Activated CD4-positive, alpha-beta memory T cell treated with anti-CD3 and anti-CD28 coated beads for 36 hours (primary cell): ENCODE measurements at regions of chr10 and their contacts with region 1.

Region 1: GRCh38 chr10:91251430-91252056 is 31.1 kb downstream of the PCGF5 start:
- DNase-seq: peak; percentile 63
- H3K4me3 Mint-ChIP-seq: no peak overlapping the region
- H3K27ac Mint-ChIP-seq: no peak overlapping the region
- H3K4me1 Mint-ChIP-seq: peaks cover 4% of the 10 kb centered on the region
- H3K27me3 Mint-ChIP-seq: no peaks in the 10 kb centered on the region

Region 2: DNA sequence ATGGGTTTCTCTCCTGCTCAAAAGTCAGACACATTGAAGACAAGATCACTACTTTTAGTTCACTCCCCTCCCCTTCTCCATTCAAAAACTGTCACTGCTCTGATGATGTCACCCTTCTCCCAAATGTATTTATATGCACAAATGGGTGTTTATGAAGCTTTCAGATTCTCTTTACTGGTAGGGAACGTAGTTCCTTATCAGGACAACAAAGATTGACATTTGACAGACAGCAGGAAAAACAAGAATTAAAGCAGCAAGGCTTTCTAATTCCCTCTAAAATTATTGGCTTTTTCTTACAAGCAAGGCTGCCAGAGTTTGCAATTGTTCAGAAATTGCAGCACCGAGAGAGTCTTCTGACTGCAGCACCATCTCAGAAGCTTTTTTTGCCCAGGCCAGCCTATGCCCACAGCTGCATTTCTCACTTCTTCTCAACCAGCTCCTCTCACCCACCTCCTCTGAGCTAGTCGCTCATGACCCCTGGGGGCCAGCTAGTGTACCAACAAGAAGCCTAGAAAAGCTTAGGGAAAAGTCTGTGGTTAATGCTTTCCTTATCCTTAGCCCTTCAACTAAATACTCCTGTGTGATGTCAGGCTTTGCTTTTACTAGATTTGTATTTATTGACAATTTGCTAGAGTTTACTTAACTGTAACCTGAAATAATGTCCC is 658.8 kb before region 1 on chr10:
- CTCF ChIA-PET with region 1: no interaction called
- POLR2A ChIA-PET with region 1: no interaction called
- intact Hi-C with region 1: no loop called
- DNase-seq: peak; percentile 18
- H3K4me3 Mint-ChIP-seq: no peak overlapping the region
- H3K27ac Mint-ChIP-seq: no peak overlapping the region
- H3K4me1 Mint-ChIP-seq: no peaks in the 10 kb centered on the region
- H3K27me3 Mint-ChIP-seq: peaks cover 2% of the 10 kb centered on the region

Region 3: DNA sequence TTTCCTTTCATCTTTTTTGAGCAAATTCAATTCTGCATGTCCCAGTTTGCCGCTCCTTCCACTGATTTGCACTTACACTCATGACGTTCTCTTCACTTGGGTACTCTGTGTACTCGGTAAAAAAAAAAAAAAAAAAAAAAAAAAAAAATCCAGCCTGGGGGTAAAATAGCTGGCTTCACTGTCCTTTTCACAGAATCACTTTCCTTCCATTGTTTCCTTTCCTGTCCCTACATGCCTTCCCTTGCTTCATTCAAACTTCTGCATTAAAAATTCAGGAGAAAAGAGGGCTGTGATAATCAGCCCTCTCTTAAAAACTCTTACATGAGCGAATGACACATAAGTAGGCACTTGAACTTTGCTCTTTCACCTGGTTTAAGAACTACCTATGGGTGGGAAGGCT is 339.4 kb before region 1 on chr10:
- CTCF ChIA-PET with region 1: interaction called, 89 read pairs
- POLR2A ChIA-PET with region 1: no interaction called
- intact Hi-C with region 1: loop called (anchors 1 kb)
- DNase-seq: no peak
- H3K4me3 Mint-ChIP-seq: no peak overlapping the region
- H3K27ac Mint-ChIP-seq: no peak overlapping the region
- H3K4me1 Mint-ChIP-seq: peaks cover 2% of the 10 kb centered on the region
- H3K27me3 Mint-ChIP-seq: no peaks in the 10 kb centered on the region

Region 4: GRCh38 chr10:91043173-91043910 is 208.2 kb before region 1 on chr10:
- CTCF ChIA-PET with region 1: interaction called, 11 read pairs
- POLR2A ChIA-PET with region 1: no interaction called
- intact Hi-C with region 1: loop called (anchors 1 kb)
- DNase-seq: no peak
- H3K4me3 Mint-ChIP-seq: no peak overlapping the region
- H3K27ac Mint-ChIP-seq: no peak overlapping the region
- H3K4me1 Mint-ChIP-seq: no peaks in the 10 kb centered on the region
- H3K27me3 Mint-ChIP-seq: peaks cover 6% of the 10 kb centered on the region

Region 5: DNA sequence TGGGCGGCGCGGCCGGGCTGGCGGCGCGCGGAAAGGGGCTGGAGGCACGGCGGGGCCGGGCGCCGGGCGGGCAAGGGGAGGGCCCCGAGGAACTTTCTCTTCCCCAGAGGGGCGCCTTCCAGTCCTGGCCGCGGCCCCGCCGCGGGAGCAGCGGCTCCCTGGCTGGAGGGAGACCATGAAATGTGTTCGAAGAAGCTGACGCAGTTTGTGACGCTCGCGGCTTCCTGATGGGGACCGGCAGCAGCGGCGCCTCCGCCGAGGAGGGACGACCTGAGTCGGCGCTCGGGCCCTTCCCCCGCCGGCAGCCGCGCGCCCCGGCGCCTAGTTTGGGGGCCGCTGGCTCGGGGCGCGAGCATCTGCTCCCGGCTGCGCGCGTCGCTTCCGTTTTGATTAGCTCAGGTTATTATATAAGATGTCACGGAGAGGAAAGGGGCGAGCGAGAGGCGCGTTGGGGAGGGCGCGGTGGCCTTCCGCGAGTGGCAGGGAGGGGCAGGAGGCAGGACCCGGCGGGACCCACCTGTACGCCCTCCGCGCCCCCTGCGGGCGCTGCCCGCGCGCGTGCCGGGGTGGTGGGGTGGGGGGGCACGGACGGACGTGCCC is 88.2 kb before region 1 on chr10:
- CTCF ChIA-PET with region 1: interaction called, 11 read pairs
- POLR2A ChIA-PET with region 1: no interaction called
- intact Hi-C with region 1: loop called (anchors 2 kb)
- DNase-seq: peak; percentile 79
- H3K4me3 Mint-ChIP-seq: peak overlapping the region; percentile 82
- H3K27ac Mint-ChIP-seq: peak overlapping the region; percentile 87
- H3K4me1 Mint-ChIP-seq: peaks cover 47% of the 10 kb centered on the region
- H3K27me3 Mint-ChIP-seq: no peaks in the 10 kb centered on the region

Region 6: GRCh38 chr10:91220194-91220953 is 31.2 kb before region 1 on chr10 and contains the start of gene PCGF5:
- CTCF ChIA-PET with region 1: interaction called, 7 read pairs
- POLR2A ChIA-PET with region 1: no interaction called
- intact Hi-C with region 1: loop called (anchors 2 kb)
- DNase-seq: peak; percentile 94
- H3K4me3 Mint-ChIP-seq: peak within 1 kb of the TSS; percentile 90
- H3K27ac Mint-ChIP-seq: peak within 1 kb of the TSS; percentile 64
- H3K4me1 Mint-ChIP-seq: peaks cover 52% of the 10 kb centered on the region
- H3K27me3 Mint-ChIP-seq: no peaks in the 10 kb centered on the region
- total RNA-seq, gene PCGF5: 42.9 to 46.8 TPM

Region 7: GRCh38 chr10:91788220-91788924 is 536.8 kb after region 1 on chr10:
- CTCF ChIA-PET with region 1: no interaction called
- POLR2A ChIA-PET with region 1: no interaction called
- intact Hi-C with region 1: no loop called
- DNase-seq: no peak
- H3K4me3 Mint-ChIP-seq: no peak overlapping the region
- H3K27ac Mint-ChIP-seq: no peak overlapping the region
- H3K4me1 Mint-ChIP-seq: no peaks in the 10 kb centered on the region
- H3K27me3 Mint-ChIP-seq: peaks cover under 1% of the 10 kb centered on the region